AG04450 (cell line): ENCODE measurements at regions of chr11 and their contacts with region 1.

Region 1: GRCh38 chr11:92269021-92269420 is 44.4 kb downstream of the FAT3 start:
- DNase-seq: peak; percentile 16
- H3K4me3 ChIP-seq: no peak overlapping the region
- H3K27ac ChIP-seq: no peak overlapping the region
- H3K27me3 ChIP-seq: no peaks in the 10 kb centered on the region
- CTCF ChIP-seq: no peak

Region 2: GRCh38 chr11:92251980-92252379 is 17.0 kb before region 1 on chr11:
- CTCF ChIA-PET with region 1: interaction called, 4 read pairs
- POLR2A ChIA-PET with region 1: interaction called, 12 read pairs
- DNase-seq: peak; percentile 30
- H3K4me3 ChIP-seq: no peak overlapping the region
- H3K27ac ChIP-seq: no peak overlapping the region
- H3K27me3 ChIP-seq: no peaks in the 10 kb centered on the region
- CTCF ChIP-seq: no peak